ENCODE measurements at regions of chr18 and their contacts with region 1.

Region 1: GRCh38 chr18:48475635-48476549 is 62.9 kb upstream of the CTIF start:
- DNase-seq: no peak
- ATAC-seq: peak; percentile 97 to 99 (median 98)
- H3K4me3 ChIP-seq: no peak overlapping the region
- H3K27ac ChIP-seq: no peak overlapping the region
- H3K4me1 ChIP-seq: peaks cover 0 to 6% (median 2%) of the 10 kb centered on the region in 4 donors
- H3K27me3 ChIP-seq: no peaks in the 10 kb centered on the region
- CTCF ChIP-seq: peak; percentile 80 to 88 (median 86)
- POLR2A ChIP-seq: no peak

Region 2: GRCh38 chr18:48100651-48101165 is 375.2 kb before region 1 on chr18:
- intact Hi-C with region 1: no loop called
- DNase-seq: no peak
- ATAC-seq: peak in 1 of 4 donors; percentile 22
- H3K4me3 ChIP-seq: no peak overlapping the region
- H3K27ac ChIP-seq: no peak overlapping the region
- H3K4me1 ChIP-seq: no peaks in the 10 kb centered on the region
- H3K27me3 ChIP-seq: no peaks in the 10 kb centered on the region
- CTCF ChIP-seq: no peak
- POLR2A ChIP-seq: no peak

Region 3: GRCh38 chr18:48538531-48539405 is 62.9 kb after region 1 on chr18 and contains the start of gene CTIF:
- intact Hi-C with region 1: loop called in 1 of 2 experiments (anchors 10 kb)
- DNase-seq: peak; percentile 96 to 98 (median 97)
- ATAC-seq: peak; percentile 77 to 86 (median 84)
- H3K4me3 ChIP-seq: peak within 1 kb of the TSS; percentile 75 to 87 (median 83)
- H3K27ac ChIP-seq: peak within 1 kb of the TSS; percentile 64 to 89 (median 85)
- H3K4me1 ChIP-seq: peaks cover 0 to 18% (median 4%) of the 10 kb centered on the region in 4 donors
- H3K27me3 ChIP-seq: no peaks in the 10 kb centered on the region
- CTCF ChIP-seq: no peak
- POLR2A ChIP-seq: peak; percentile 65
- total RNA-seq, gene CTIF: 29.0 to 60.6 (median 43.1) TPM

Region 4: DNA sequence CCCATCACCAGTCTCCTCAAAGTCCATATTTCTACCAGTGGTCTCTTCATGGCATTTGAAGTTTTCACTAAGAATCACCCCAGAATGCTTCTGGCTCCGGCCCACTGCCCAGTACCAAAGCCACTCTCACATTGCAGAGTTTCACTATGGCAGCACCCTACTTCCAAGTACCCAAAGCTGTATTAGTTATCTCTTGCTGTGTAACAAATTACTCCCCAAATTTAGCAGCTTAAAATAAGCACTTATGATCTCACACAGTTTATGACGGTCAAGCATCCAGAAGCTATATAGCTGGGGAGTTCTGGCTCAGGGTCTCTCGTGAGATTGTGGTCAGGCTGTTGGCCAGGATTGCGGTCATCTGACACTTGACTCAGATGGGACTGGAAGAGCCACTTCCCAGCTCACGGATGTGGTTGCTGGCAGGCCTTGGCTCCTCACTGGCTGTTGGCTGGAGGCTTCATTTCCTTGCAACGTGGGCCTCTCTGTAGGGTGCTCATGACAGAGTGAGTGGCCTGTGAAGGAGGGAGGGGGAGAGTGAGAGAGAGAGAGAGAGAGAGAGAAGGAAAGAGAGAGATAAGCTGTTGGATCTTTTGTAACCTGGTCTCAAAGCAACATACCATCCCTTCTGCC is 252.4 kb after region 1 on chr18:
- intact Hi-C with region 1: no loop called
- DNase-seq: peak in 1 of 3 donors; percentile 15
- ATAC-seq: peak in 1 of 4 donors; percentile 41
- H3K4me3 ChIP-seq: no peak overlapping the region
- H3K27ac ChIP-seq: no peak overlapping the region
- H3K4me1 ChIP-seq: no peaks in the 10 kb centered on the region
- H3K27me3 ChIP-seq: no peaks in the 10 kb centered on the region
- CTCF ChIP-seq: no peak
- POLR2A ChIP-seq: no peak

Region 5: GRCh38 chr18:48879008-48879431 is 403.1 kb after region 1 on chr18:
- intact Hi-C with region 1: no loop called
- DNase-seq: no peak
- ATAC-seq: no peak
- H3K4me3 ChIP-seq: no peak overlapping the region
- H3K27ac ChIP-seq: no peak overlapping the region
- H3K4me1 ChIP-seq: no peaks in the 10 kb centered on the region
- H3K27me3 ChIP-seq: no peaks in the 10 kb centered on the region
- CTCF ChIP-seq: no peak
- POLR2A ChIP-seq: no peak

Region 6: DNA sequence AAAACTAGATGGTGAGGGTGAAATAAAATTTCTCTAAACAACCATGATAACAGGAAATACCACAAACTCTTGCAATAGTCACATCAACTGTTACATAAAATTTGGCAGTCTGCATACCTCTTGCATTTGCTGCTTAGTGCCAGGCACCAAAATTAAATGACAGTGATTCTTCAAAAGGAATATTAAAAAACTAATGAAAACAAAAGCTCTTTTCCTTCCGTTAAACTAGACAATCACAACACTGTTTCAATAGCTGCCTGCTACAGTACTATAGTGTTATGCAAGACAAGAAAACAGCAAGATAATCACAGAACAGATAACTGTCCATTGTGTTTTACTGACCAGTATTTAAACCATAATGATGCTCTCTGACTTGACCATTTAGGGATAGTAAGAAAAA is 713.9 kb after region 1 on chr18:
- intact Hi-C with region 1: no loop called
- DNase-seq: no peak
- ATAC-seq: peak in 2 of 4 donors; percentile 38 to 54
- H3K4me3 ChIP-seq: no peak overlapping the region
- H3K27ac ChIP-seq: no peak overlapping the region
- H3K4me1 ChIP-seq: no peaks in the 10 kb centered on the region
- H3K27me3 ChIP-seq: no peaks in the 10 kb centered on the region
- CTCF ChIP-seq: no peak
- POLR2A ChIP-seq: no peak

Measured in right lobe of liver (tissue), 6 donors.